MCF 10A (cell line): ENCODE measurements at regions of chr11 and their contacts with region 1.

Region 1: DNA sequence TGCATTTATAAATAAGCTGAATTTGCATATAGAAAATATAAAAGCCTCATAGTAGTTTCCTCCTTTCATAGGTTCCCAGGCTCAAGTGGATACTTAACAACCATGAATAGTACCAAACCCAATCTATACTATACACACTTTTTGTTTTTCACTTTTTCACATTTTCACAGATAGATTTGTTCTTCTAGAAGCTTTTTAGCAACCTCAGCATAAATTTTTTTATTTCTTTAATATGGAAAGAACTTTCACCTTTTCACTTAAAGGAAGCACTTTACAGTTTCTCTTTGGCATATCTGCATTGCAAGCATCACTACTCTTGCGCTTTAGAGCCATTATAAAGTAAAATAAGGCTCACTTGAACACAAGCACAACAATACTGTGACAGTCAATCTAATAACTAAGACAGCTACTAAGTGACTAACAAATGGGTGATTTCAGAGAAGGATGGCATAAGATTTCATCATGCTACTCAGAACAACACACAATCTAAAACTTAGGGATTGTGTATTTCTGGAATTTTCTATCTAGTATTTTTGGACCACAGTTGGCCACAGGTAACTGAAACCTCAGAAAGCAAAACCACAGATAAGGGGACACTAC is 1063.6 kb downstream of the FAM181B start:
- DNase-seq: no peak
- H3K4me3 Mint-ChIP-seq: no peak overlapping the region
- H3K27ac Mint-ChIP-seq: no peak overlapping the region
- H3K4me1 Mint-ChIP-seq: no peaks in the 10 kb centered on the region
- H3K27me3 Mint-ChIP-seq: peaks cover 23% of the 10 kb centered on the region
- CTCF ChIP-seq: no peak

Region 2: GRCh38 chr11:81963018-81963417 is 293.0 kb after region 1 on chr11:
- CTCF ChIA-PET with region 1: no interaction called
- POLR2A ChIA-PET with region 1: no interaction called
- intact Hi-C with region 1: loop called (anchors 10 kb)
- DNase-seq: peak; percentile 4
- H3K4me3 Mint-ChIP-seq: no peak overlapping the region
- H3K27ac Mint-ChIP-seq: no peak overlapping the region
- H3K4me1 Mint-ChIP-seq: no peaks in the 10 kb centered on the region
- H3K27me3 Mint-ChIP-seq: peaks cover 96% of the 10 kb centered on the region
- CTCF ChIP-seq: no peak